Activated B cell treated with CpG ODN at 0.5 μM for 24 hours (primary cell): ENCODE measurements at regions of chr11 and their contacts with region 1.

Region 1: GRCh38 chr11:93747122-93747521 is 5.7 kb downstream of the C11orf54 start:
- DNase-seq: no peak
- ATAC-seq: no peak
- H3K4me3 Mint-ChIP-seq: no peak overlapping the region
- H3K27ac Mint-ChIP-seq: no peak overlapping the region
- H3K4me1 Mint-ChIP-seq: peaks cover 15% of the 10 kb centered on the region
- H3K27me3 Mint-ChIP-seq: no peaks in the 10 kb centered on the region
- CTCF ChIP-seq: no peak

Region 2: DNA sequence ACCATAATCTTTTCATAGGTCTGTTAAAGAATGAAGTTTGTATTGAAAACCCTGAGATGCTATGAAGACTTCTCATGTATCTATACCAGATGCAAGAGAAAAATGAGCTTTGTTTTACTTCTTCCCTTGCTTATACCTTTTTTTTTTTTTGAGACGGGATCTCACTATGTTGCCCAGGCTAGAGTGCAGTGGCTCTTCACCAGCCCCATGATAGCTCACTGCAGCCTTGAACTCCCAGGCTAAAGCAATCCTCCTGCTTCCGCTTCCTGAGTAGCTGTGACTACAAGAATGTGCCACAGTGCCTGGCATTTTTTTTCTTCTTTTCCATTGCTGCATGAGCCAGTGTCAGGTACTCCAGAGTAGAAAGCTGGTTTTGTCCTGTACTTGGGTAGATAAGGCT is 74.8 kb before region 1 on chr11:
- CTCF ChIA-PET with region 1: no interaction called
- POLR2A ChIA-PET with region 1: no interaction called
- intact Hi-C with region 1: no loop called
- DNase-seq: no peak
- ATAC-seq: no peak
- H3K4me3 Mint-ChIP-seq: no peak overlapping the region
- H3K27ac Mint-ChIP-seq: no peak overlapping the region
- H3K4me1 Mint-ChIP-seq: no peaks in the 10 kb centered on the region
- H3K27me3 Mint-ChIP-seq: no peaks in the 10 kb centered on the region
- CTCF ChIP-seq: no peak

Region 3: GRCh38 chr11:93704237-93704636 is 42.9 kb before region 1 on chr11:
- CTCF ChIA-PET with region 1: no interaction called
- POLR2A ChIA-PET with region 1: no interaction called
- intact Hi-C with region 1: no loop called
- DNase-seq: no peak
- ATAC-seq: no peak
- H3K4me3 Mint-ChIP-seq: no peak overlapping the region
- H3K27ac Mint-ChIP-seq: no peak overlapping the region
- H3K4me1 Mint-ChIP-seq: peaks cover 8% of the 10 kb centered on the region
- H3K27me3 Mint-ChIP-seq: no peaks in the 10 kb centered on the region
- CTCF ChIP-seq: no peak

Region 4: DNA sequence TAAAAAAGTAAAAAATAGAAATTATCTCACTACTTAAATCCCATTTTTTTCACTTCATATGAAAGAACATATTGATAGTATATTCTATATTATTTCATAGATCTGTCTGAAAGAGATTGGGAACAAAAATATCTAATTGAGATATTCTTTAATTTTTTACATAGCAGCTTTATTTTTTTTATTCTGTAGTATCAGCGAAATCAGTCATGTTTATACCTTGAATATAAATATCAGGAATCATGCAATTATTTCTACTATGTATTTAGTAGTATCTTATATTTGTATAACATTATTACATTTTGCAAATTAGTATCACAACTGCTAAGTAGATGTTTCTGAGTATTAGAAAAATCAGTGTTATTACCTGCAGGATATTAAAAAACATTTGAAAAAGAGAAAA is 14.8 kb after region 1 on chr11:
- CTCF ChIA-PET with region 1: no interaction called
- POLR2A ChIA-PET with region 1: no interaction called
- intact Hi-C with region 1: loop called (anchors 2 kb)
- DNase-seq: no peak
- ATAC-seq: no peak
- H3K4me3 Mint-ChIP-seq: no peak overlapping the region
- H3K27ac Mint-ChIP-seq: no peak overlapping the region
- H3K4me1 Mint-ChIP-seq: no peaks in the 10 kb centered on the region
- H3K27me3 Mint-ChIP-seq: no peaks in the 10 kb centered on the region
- CTCF ChIP-seq: no peak

Region 5: DNA sequence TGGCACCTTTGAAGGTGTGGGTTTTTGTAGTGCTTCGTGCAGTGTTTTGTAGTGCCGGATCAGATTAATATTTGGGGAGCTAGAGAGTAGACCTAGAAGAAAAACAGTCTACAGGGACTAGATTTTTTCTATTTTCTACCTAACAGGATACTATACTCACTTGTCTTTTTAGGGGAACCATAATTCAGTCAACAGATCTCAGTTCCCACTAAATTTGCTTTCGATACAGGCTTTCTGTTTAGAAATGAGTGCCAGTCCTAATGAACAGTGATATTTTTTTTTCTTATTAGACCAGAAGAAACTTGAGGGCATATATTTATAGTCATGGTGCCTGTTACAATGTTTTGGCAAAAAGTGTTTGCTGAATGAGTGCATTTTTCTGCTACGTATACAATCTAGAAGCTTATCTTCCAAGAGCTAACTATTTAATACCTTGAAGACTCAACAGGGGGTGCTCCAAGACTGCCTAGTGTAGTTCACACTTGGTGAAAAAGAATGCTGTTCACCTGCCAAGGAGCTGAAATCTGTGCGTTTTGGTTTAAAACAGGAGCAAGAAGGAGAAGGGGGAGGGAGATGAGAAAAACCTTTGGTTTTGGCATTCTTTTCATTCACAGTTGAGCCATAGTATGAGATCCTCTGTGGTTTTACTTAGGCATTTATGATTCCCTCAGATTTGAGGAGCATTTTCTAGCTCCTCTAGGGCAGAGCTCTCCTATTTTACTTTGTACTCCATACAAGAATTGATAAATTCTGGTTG is 148.2 kb after region 1 on chr11:
- CTCF ChIA-PET with region 1: no interaction called
- POLR2A ChIA-PET with region 1: no interaction called
- intact Hi-C with region 1: no loop called
- DNase-seq: no peak
- ATAC-seq: peak; percentile 31
- H3K4me3 Mint-ChIP-seq: no peak overlapping the region
- H3K27ac Mint-ChIP-seq: no peak overlapping the region
- H3K4me1 Mint-ChIP-seq: no peaks in the 10 kb centered on the region
- H3K27me3 Mint-ChIP-seq: peaks cover 29% of the 10 kb centered on the region
- CTCF ChIP-seq: no peak